Activated naive CD4-positive, alpha-beta T cell treated with anti-CD3 and anti-CD28 coated beads for 36 hours (primary cell): ENCODE measurements at regions of chr16 and their contacts with region 1.

Region 1: GRCh38 chr16:56700195-56700594 is 17.9 kb downstream of the MT1X start:
- DNase-seq: no peak
- H3K4me3 Mint-ChIP-seq: no peak overlapping the region
- H3K27ac Mint-ChIP-seq: no peak overlapping the region
- H3K4me1 Mint-ChIP-seq: peaks cover 4% of the 10 kb centered on the region
- H3K27me3 Mint-ChIP-seq: no peaks in the 10 kb centered on the region

Region 2: GRCh38 chr16:56513972-56514371 is 186.2 kb before region 1 on chr16:
- CTCF ChIA-PET with region 1: interaction called, 20 read pairs
- intact Hi-C with region 1: loop called (anchors 1 kb)
- DNase-seq: peak; percentile 76
- H3K4me3 Mint-ChIP-seq: no peak overlapping the region
- H3K27ac Mint-ChIP-seq: no peak overlapping the region
- H3K4me1 Mint-ChIP-seq: peaks cover 41% of the 10 kb centered on the region
- H3K27me3 Mint-ChIP-seq: no peaks in the 10 kb centered on the region

Region 3: DNA sequence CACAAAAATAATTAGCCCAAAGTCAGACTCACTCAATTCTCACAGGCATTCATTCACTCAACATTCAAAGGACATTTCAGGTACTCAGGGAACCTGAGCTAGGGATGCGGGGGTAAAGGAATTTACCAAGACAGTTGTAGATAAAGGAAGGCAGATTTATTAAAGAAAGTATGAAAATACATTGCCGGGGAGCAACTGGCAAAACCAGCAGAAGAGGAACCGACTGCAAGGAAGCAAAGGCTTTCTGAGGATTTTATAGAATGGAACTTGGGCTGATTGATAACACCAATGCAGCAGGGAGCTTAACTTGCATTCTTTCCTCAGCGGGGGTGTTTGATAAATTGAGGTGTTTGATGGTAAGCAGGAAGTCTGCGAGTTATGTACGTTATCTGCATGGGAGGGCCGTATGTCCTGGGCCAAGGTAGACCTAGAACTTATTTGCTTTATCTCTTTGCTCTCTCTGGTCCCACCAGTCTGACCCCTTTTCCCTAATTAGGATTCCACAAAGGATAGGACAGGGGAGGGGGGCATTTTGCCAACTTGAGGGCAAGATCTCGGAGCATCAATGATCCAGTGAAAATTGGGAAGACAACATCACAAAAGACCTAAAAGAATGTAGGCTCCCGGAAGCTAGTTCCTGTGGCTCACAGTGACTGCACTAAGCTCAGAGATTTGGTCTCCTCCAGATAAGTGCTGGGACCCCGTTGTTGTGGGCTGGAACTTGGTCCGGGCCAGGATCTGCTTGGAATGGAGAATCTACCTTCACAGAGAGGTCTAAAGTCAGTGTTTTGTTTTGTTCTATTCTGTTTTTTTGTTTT is 116.6 kb before region 1 on chr16:
- CTCF ChIA-PET with region 1: interaction called, 126 read pairs
- intact Hi-C with region 1: no loop called
- DNase-seq: no peak
- H3K4me3 Mint-ChIP-seq: no peak overlapping the region
- H3K27ac Mint-ChIP-seq: no peak overlapping the region
- H3K4me1 Mint-ChIP-seq: no peaks in the 10 kb centered on the region
- H3K27me3 Mint-ChIP-seq: peaks cover under 1% of the 10 kb centered on the region

Region 4: GRCh38 chr16:56643080-56643778 is 57.0 kb before region 1 on chr16:
- CTCF ChIA-PET with region 1: interaction called, 7 read pairs
- intact Hi-C with region 1: loop called (anchors 1 kb)
- DNase-seq: peak; percentile 87
- H3K4me3 Mint-ChIP-seq: peak overlapping the region; percentile 46
- H3K27ac Mint-ChIP-seq: peak overlapping the region; percentile 9
- H3K4me1 Mint-ChIP-seq: peaks cover 21% of the 10 kb centered on the region
- H3K27me3 Mint-ChIP-seq: peaks cover 40% of the 10 kb centered on the region

Region 5: GRCh38 chr16:56673921-56674320 is 26.3 kb before region 1 on chr16:
- CTCF ChIA-PET with region 1: interaction called, 15 read pairs
- intact Hi-C with region 1: loop called (anchors 1 kb)
- DNase-seq: peak; percentile 52
- H3K4me3 Mint-ChIP-seq: no peak overlapping the region
- H3K27ac Mint-ChIP-seq: no peak overlapping the region
- H3K4me1 Mint-ChIP-seq: peaks cover 18% of the 10 kb centered on the region
- H3K27me3 Mint-ChIP-seq: peaks cover 26% of the 10 kb centered on the region

Region 6: GRCh38 chr16:56715120-56715519 is 14.9 kb after region 1 on chr16:
- CTCF ChIA-PET with region 1: interaction called, 18 read pairs
- intact Hi-C with region 1: no loop called
- DNase-seq: no peak
- H3K4me3 Mint-ChIP-seq: no peak overlapping the region
- H3K27ac Mint-ChIP-seq: no peak overlapping the region
- H3K4me1 Mint-ChIP-seq: peaks cover under 1% of the 10 kb centered on the region
- H3K27me3 Mint-ChIP-seq: no peaks in the 10 kb centered on the region